Sciatic nerve (tissue), 2 donors: ENCODE measurements at regions of chr16 and their contacts with region 1.

Region 1: DNA sequence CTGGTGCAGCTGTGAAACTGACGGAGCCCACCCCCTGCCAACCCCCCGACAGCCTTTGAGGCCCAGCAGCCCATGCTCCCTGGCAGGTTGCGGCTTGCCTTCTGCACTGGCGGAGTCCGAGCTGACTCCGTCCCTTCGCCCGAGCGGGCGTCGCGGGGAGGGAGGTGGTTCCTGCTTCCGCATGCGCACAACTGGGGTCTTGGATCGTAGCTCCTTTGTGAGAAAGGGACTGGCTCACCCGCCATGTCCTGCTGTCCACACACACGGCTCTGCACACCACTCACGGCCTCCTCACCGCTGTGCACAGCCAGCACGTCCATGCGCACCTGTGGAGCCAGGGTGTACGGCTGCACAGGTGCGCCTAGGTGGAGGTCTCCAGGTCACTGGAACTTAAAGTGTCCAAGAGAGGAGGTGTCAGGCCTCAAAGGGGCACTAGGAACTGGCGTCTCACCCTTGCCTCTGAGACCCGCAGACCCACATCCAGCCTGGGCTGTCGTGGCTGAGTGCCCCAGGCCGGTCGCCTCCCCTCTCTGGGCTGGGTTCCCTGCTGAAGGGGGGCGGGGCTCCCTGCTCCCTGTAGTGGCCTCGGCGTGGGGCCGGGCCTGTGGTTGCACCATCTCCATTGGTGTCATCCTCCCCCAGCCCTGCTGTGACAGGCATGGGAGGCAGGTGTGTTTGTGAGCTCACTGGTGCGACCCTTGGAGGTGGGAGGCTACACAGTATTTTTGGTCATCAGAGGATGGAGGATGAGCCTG is 45.3 kb downstream of the JPH3 start:
- DNase-seq: no peak
- ATAC-seq: no peak

Region 2: GRCh38 chr16:87678618-87679017 is 31.0 kb after region 1 on chr16:
- intact Hi-C with region 1: loop called (anchors 1 kb)
- DNase-seq: no peak
- ATAC-seq: no peak

Region 3: DNA sequence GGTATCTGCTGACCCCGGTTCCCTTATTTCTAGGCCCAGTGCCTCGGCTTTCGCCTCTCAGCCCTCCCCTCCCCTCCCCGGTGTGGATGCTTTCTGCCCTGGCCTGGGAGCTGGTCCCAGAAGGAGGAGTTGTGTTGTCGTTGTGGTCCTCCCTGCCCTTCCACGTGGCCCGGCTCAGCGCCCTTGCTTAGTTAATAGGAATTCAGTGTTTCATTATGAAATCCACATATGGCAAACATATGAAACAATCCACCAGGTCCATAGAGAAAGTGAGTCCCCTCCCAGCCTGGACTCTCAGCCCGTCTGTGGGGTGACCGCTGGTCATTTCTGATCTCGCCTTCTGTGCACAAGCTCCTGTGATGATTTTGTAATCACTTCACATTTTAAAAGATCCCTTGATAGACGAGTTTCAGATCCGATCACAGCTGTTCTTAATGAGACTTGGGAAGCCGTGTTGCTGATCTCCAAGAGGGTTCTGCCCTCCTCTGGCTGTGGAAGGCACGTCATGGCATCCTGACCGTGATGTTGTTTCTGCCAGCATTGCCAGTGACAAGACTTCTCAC is 415.7 kb after region 1 on chr16:
- intact Hi-C with region 1: no loop called
- DNase-seq: peak; percentile 74
- ATAC-seq: peak; percentile 75

Region 4: DNA sequence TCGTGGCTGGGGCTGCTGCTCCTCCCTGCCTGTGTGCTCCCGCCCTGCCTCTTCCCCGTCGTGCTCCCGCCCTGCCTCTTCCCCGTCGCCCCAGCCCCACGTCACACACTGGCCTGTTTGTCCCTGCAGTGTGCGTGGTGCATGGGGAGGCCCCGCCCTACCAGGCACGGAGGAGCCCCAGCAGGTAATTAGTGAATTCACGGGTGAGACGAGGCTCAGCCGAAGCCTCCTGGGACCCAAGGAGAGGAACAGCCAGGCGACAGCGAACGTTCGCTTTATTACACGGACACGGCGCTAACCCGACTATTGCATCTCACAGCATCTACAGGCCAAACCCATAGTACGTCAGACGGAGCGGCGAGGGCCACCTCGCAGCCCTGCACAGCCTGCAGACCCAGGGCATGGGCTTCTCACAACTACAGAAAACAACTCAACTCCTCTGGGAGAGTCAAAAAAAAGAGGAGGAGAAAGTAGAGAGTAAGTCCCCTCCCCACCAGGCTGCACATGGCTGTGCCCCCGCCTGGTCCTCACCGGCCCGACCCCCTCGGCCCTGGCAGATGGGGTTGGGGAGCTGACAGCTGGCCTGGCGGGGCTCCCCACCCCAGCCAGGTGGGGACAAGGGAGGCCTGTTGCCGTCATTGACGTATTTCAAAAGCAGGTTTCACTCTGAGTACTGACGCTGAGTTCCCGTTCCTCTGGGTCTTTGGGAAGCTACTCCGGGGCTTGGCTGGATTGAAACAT is 1223.2 kb after region 1 on chr16:
- intact Hi-C with region 1: no loop called
- DNase-seq: no peak
- ATAC-seq: peak; percentile 53